Activated naive CD4-positive, alpha-beta T cell treated with anti-CD3 and anti-CD28 coated beads for 36 hours (primary cell): ENCODE measurements at regions of chr18 and their contacts with region 1.

Region 1: DNA sequence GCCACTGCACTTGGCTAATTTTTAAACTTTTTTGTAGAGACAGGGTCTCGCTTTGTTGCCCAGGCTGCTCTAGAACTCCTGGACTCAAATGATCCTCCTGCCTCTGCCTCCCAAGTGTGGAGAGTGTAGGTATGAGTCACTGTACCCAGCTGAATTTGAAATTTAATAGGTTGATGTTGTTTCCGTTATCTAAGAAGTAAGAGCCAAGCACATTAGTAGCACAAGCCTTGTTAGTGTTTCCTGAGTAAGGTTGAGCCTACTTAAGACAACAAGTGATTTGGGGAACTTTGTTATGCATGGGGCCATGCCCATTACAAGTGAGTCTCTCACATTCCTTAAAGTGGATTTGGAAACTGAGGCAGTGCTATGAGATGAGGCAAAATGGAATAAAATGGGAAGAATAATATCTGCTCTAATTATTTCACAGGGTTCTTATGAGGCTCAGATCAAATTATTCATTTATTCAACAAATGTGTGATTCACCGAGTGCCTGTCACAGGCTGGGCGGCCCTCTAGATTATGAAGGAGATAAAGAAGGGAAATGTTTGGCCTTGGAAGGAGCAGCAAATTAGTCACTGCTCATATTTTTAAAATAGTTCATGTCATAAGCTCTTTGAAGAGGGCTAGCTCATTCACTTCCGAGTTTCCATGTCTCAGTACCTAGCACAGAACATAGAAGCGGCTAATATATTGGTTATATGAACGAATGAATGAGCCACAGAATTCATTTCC is 217.2 kb downstream of the LDLRAD4 start:
- DNase-seq: no peak
- H3K4me3 Mint-ChIP-seq: no peak overlapping the region
- H3K27ac Mint-ChIP-seq: no peak overlapping the region
- H3K4me1 Mint-ChIP-seq: peaks cover 58% of the 10 kb centered on the region
- H3K27me3 Mint-ChIP-seq: no peaks in the 10 kb centered on the region

Region 2: GRCh38 chr18:12990967-12991838 is 444.6 kb before region 1 on chr18 and contains the start of gene CEP192:
- CTCF ChIA-PET with region 1: no interaction called
- intact Hi-C with region 1: loop called (anchors 10 kb)
- DNase-seq: peak; percentile 99
- H3K4me3 Mint-ChIP-seq: peak within 1 kb of the TSS; percentile 99
- H3K27ac Mint-ChIP-seq: peak within 1 kb of the TSS; percentile 97
- H3K4me1 Mint-ChIP-seq: peaks cover 10% of the 10 kb centered on the region
- H3K27me3 Mint-ChIP-seq: no peaks in the 10 kb centered on the region
- total RNA-seq, gene CEP192: 32.7 to 33.6 TPM

Region 3: DNA sequence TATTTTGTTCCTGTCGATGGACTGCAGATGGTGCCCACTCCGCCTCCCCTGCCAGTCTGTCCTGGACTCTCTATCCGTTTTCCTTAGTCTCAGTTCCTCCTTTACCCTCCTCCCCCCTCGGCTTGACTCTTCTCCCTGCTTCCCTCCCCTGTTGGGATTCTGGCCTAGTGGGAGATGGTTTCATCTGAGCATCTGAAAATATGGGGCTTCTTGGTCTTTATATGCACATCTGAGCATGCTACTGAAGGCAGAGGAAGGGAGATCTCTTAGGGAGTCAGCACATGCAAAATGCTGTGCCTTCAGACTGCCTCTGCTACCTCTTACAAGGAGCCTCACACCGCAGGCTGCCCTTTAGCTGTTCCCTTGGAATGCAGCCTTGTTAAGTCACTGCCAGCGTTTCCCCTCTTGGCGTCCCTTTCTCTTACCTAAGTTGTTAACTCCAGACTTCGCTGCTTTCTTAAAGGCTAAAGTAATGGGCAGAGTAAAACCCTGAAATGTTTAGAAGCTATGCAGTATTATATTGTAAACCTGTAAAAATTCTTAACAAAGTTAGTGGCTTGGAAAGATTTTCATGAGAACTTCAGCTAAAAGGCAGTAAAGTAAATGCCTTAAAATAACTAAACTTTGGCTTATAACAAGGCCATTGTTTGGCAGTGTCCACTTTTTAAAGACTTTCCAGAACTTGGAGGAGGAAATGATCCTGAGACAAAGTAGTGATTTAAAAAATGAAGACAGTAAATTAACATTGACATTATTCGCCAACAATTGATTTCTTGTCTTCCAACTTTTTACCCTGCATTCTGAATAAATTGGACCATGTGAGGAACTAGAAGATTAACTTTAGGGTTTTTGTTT is 167.4 kb before region 1 on chr18:
- CTCF ChIA-PET with region 1: no interaction called
- intact Hi-C with region 1: loop called (anchors 1 kb)
- DNase-seq: no peak
- H3K4me3 Mint-ChIP-seq: no peak overlapping the region
- H3K27ac Mint-ChIP-seq: no peak overlapping the region
- H3K4me1 Mint-ChIP-seq: peaks cover 71% of the 10 kb centered on the region
- H3K27me3 Mint-ChIP-seq: no peaks in the 10 kb centered on the region

Region 4: GRCh38 chr18:13381944-13382365 is 53.8 kb before region 1 on chr18:
- CTCF ChIA-PET with region 1: interaction called, 3 read pairs
- intact Hi-C with region 1: loop called (anchors 1 kb)
- DNase-seq: peak; percentile 54
- H3K4me3 Mint-ChIP-seq: peak overlapping the region; percentile 71
- H3K27ac Mint-ChIP-seq: peak overlapping the region; percentile 94
- H3K4me1 Mint-ChIP-seq: peaks cover 72% of the 10 kb centered on the region
- H3K27me3 Mint-ChIP-seq: no peaks in the 10 kb centered on the region

Region 5: GRCh38 chr18:13464432-13465123 is 28.8 kb after region 1 on chr18:
- CTCF ChIA-PET with region 1: no interaction called
- intact Hi-C with region 1: loop called (anchors 2 kb)
- DNase-seq: peak; percentile 86
- H3K4me3 Mint-ChIP-seq: peak overlapping the region; percentile 82
- H3K27ac Mint-ChIP-seq: peak overlapping the region; percentile 95
- H3K4me1 Mint-ChIP-seq: peaks cover 56% of the 10 kb centered on the region
- H3K27me3 Mint-ChIP-seq: no peaks in the 10 kb centered on the region

Region 6: DNA sequence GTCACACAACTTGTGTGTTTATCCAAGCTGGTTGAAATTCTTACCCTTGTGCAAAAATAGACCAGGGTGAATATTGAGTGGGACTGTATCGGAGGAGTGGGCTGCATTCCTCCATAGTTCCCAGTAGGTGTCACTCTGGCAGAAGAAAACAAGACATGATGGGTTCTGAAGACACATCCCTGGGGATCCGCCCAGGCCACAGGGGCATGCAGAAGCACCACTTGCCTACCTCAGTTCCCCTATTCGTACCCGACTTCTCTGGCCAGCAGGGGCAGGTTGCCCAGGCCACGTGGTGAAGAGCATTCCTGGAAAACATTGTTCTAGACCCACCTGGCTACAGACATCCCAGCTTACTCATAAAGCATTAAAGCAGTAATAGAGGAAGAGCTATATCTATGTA is 122.4 kb after region 1 on chr18:
- CTCF ChIA-PET with region 1: interaction called, 3 read pairs
- intact Hi-C with region 1: loop called (anchors 1 kb)
- DNase-seq: peak; percentile 48
- H3K4me3 Mint-ChIP-seq: no peak overlapping the region
- H3K27ac Mint-ChIP-seq: no peak overlapping the region
- H3K4me1 Mint-ChIP-seq: peaks cover 32% of the 10 kb centered on the region
- H3K27me3 Mint-ChIP-seq: no peaks in the 10 kb centered on the region

Region 7: GRCh38 chr18:13726232-13726971 is 290.6 kb after region 1 on chr18 and contains the starts of genes FAM210A and RNMT:
- CTCF ChIA-PET with region 1: no interaction called
- intact Hi-C with region 1: loop called (anchors 10 kb)
- DNase-seq: peak; percentile 96
- H3K4me3 Mint-ChIP-seq: peak within 1 kb of the TSS; percentile 91
- H3K27ac Mint-ChIP-seq: peak within 1 kb of the TSS; percentile 89
- H3K4me1 Mint-ChIP-seq: peaks cover 46% of the 10 kb centered on the region
- H3K27me3 Mint-ChIP-seq: no peaks in the 10 kb centered on the region
- total RNA-seq, gene FAM210A: 18.6 to 20.2 TPM
- total RNA-seq, gene RNMT: 25.2 to 27.4 TPM